ENCODE measurements at regions of chr5 and their contacts with region 1.

Region 1: GRCh38 chr5:81556809-81557208 is 162.9 kb upstream of the ACOT12 start:
- DNase-seq: no peak
- ATAC-seq: peak; percentile 99
- H3K4me3 Mint-ChIP-seq: no peak overlapping the region
- H3K27ac Mint-ChIP-seq: no peak overlapping the region
- H3K4me1 Mint-ChIP-seq: peaks cover 35% of the 10 kb centered on the region
- H3K27me3 Mint-ChIP-seq: no peaks in the 10 kb centered on the region

Region 2: GRCh38 chr5:81579262-81579924 is 22.6 kb after region 1 on chr5:
- CTCF ChIA-PET with region 1: no interaction called
- POLR2A ChIA-PET with region 1: no interaction called
- intact Hi-C with region 1: loop called in 1 of 2 experiments (anchors 1 kb)
- DNase-seq: no peak
- ATAC-seq: peak; percentile 51
- H3K4me3 Mint-ChIP-seq: no peak overlapping the region
- H3K27ac Mint-ChIP-seq: peak overlapping the region; percentile 12
- H3K4me1 Mint-ChIP-seq: peaks cover 20% of the 10 kb centered on the region
- H3K27me3 Mint-ChIP-seq: no peaks in the 10 kb centered on the region